Activated T-helper 2 cell treated with anti-CD3 and anti-CD28 coated beads, Interferon-gamma antibody, Interleukin-2, Interleukin-4, amounts not matched to agents 10 μg/mL and 5 μg/mL and 100 μg/mL, durations not matched to agents 14 hours and 24 hours and 36 hours (primary cell): ENCODE measurements at regions of chr2 and their contacts with region 1.

Region 1: GRCh38 chr2:189440947-189441708 is at the start of gene WDR75:
- DNase-seq: peak; percentile 87
- H3K4me3 Mint-ChIP-seq: no peak within 1 kb of the TSS
- H3K27ac Mint-ChIP-seq: peak within 1 kb of the TSS; percentile 100
- H3K4me1 Mint-ChIP-seq: peaks cover 17% of the 10 kb centered on the region
- H3K27me3 Mint-ChIP-seq: peaks cover 8% of the 10 kb centered on the region
- total RNA-seq, gene WDR75: 90.7 and 94.4 TPM in 2 replicates

Region 2: GRCh38 chr2:189297446-189297845 is 143.7 kb before region 1 on chr2:
- intact Hi-C with region 1: loop called (anchors 1 kb)
- DNase-seq: no peak
- H3K4me3 Mint-ChIP-seq: no peak overlapping the region
- H3K27ac Mint-ChIP-seq: no peak overlapping the region
- H3K4me1 Mint-ChIP-seq: peaks cover 35% of the 10 kb centered on the region
- H3K27me3 Mint-ChIP-seq: no peaks in the 10 kb centered on the region

Region 3: GRCh38 chr2:189466660-189467059 is 25.5 kb after region 1 on chr2:
- intact Hi-C with region 1: no loop called
- DNase-seq: no peak
- H3K4me3 Mint-ChIP-seq: no peak overlapping the region
- H3K27ac Mint-ChIP-seq: no peak overlapping the region
- H3K4me1 Mint-ChIP-seq: peaks cover 3% of the 10 kb centered on the region
- H3K27me3 Mint-ChIP-seq: no peaks in the 10 kb centered on the region

Region 4: GRCh38 chr2:189580658-189581353 is 139.7 kb after region 1 on chr2 and contains the start of gene SLC40A1:
- intact Hi-C with region 1: loop called (anchors 5 kb)
- DNase-seq: peak; percentile 58
- H3K4me3 Mint-ChIP-seq: peak within 1 kb of the TSS; percentile 76
- H3K27ac Mint-ChIP-seq: no peak within 1 kb of the TSS
- H3K4me1 Mint-ChIP-seq: peaks cover 21% of the 10 kb centered on the region
- H3K27me3 Mint-ChIP-seq: peaks cover 39% of the 10 kb centered on the region
- total RNA-seq, gene SLC40A1: 1.8 and 2.4 TPM in 2 replicates

Region 5: GRCh38 chr2:189762551-189763298 is 321.6 kb after region 1 on chr2 and contains the start of gene OSGEPL1:
- intact Hi-C with region 1: loop called (anchors 5 kb)
- DNase-seq: peak; percentile 90
- H3K4me3 Mint-ChIP-seq: peak within 1 kb of the TSS; percentile 92
- H3K27ac Mint-ChIP-seq: peak within 1 kb of the TSS; percentile 97
- H3K4me1 Mint-ChIP-seq: peaks cover 12% of the 10 kb centered on the region
- H3K27me3 Mint-ChIP-seq: no peaks in the 10 kb centered on the region
- total RNA-seq, gene OSGEPL1: 9.7 and 11.6 TPM in 2 replicates

Region 6: GRCh38 chr2:190137561-190137960 is 696.4 kb after region 1 on chr2:
- intact Hi-C with region 1: no loop called
- DNase-seq: no peak
- H3K4me3 Mint-ChIP-seq: no peak overlapping the region
- H3K27ac Mint-ChIP-seq: no peak overlapping the region
- H3K4me1 Mint-ChIP-seq: no peaks in the 10 kb centered on the region
- H3K27me3 Mint-ChIP-seq: no peaks in the 10 kb centered on the region